ENCODE measurements at regions of chr7 and their contacts with region 1.

Region 1: DNA sequence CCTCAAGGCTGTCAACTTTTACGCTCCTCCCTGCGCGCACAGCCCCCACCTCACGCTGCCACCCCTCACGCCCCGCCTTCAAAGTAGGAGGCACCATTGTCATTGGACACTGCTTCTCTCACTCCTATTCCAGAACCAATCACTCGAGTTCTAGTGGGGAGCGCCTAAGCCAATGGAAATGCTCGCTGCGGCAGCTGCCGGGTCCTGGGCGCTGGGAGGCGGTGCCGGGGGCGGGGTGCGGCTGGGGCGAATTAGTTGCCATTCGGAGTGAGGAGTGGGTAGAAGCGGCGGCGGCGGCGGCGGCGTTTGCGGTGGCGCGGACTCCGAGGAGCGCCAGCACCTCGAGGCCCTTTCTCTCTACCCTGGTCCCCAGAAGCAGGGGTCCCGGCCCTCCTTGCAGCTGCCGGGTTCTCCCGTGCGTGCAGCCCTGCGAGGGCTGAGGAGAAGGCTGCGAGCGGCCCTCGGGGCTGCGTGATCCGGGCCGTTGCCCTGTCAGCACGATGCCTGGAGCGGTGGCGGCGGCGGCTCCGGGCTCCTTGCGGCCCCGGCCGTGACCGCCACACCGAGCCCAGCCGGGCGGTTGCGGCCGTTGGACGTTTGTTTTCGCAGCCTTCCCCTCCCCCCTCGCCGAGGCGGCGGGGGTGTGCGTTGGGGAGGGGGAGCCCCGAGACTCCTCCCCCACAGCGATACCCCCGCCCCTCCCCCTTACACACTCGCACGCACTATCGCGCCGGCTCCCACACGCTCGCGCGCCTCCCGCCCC is at the start of gene GLCCI1:
- DNase-seq: peak; percentile 93
- ATAC-seq: peak; percentile 89
- H3K4me3 Mint-ChIP-seq: peak within 1 kb of the TSS; percentile 92
- H3K27ac Mint-ChIP-seq: peak within 1 kb of the TSS; percentile 96
- H3K4me1 Mint-ChIP-seq: peaks cover 36% of the 10 kb centered on the region
- H3K27me3 Mint-ChIP-seq: no peaks in the 10 kb centered on the region
- CTCF ChIP-seq: no peak
- total RNA-seq, gene GLCCI1: 32.4 and 37.4 TPM in 2 replicates

Region 2: DNA sequence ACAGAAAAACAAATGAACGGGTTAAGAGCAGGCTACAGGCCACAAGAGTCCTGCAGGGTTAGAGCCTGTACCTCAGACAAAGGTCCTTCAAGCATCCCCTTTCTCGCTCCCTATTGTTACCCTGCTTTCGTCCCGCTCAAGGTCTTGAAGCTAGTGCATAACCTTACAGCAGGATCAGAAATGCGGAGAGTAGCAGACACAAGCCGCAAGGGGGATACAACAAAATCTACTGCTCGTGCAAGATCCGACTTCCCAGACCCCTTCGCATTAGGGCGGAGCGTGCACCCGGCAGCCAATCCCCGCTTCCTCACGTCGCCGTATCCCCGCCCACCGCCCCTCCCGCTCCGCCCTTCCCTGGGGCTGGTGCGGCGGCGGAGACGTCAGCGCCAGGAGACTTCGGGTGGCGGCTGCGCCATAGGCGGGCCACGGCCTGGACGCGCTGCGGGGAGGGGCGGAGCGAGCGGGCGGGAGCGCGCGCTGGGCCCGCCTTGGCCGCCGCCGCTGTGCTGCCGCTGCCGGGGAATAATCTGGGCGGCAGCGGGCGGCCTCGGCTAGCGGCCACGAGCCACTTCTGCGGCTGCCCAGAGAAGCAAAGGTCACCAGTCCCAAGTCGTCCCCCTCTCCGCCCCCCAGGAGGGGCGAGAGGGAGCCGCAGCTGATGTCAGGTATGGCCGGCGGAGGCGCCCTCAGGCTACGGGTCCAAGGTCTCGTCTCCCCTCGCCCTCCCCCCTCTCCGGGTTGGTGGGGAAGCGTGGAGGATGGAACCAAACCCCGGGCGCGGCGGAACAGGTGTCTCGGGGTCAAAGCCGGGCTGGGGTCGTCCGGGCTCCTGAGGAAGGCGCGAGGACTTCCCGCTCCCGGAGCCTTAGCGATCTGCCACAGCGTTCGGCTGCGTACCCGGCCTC is 786.3 kb before region 1 on chr7 and contains the start of gene C1GALT1:
- CTCF ChIA-PET with region 1: no interaction called
- POLR2A ChIA-PET with region 1: interaction called, 3 read pairs
- intact Hi-C with region 1: loop called (anchors 1 kb)
- DNase-seq: peak; percentile 94
- ATAC-seq: peak; percentile 84
- H3K4me3 Mint-ChIP-seq: peak within 1 kb of the TSS; percentile 99
- H3K27ac Mint-ChIP-seq: peak within 1 kb of the TSS; percentile 100
- H3K4me1 Mint-ChIP-seq: peaks cover 43% of the 10 kb centered on the region
- H3K27me3 Mint-ChIP-seq: no peaks in the 10 kb centered on the region
- CTCF ChIP-seq: no peak
- total RNA-seq, gene C1GALT1: 42.1 and 44.2 TPM in 2 replicates

Region 3: DNA sequence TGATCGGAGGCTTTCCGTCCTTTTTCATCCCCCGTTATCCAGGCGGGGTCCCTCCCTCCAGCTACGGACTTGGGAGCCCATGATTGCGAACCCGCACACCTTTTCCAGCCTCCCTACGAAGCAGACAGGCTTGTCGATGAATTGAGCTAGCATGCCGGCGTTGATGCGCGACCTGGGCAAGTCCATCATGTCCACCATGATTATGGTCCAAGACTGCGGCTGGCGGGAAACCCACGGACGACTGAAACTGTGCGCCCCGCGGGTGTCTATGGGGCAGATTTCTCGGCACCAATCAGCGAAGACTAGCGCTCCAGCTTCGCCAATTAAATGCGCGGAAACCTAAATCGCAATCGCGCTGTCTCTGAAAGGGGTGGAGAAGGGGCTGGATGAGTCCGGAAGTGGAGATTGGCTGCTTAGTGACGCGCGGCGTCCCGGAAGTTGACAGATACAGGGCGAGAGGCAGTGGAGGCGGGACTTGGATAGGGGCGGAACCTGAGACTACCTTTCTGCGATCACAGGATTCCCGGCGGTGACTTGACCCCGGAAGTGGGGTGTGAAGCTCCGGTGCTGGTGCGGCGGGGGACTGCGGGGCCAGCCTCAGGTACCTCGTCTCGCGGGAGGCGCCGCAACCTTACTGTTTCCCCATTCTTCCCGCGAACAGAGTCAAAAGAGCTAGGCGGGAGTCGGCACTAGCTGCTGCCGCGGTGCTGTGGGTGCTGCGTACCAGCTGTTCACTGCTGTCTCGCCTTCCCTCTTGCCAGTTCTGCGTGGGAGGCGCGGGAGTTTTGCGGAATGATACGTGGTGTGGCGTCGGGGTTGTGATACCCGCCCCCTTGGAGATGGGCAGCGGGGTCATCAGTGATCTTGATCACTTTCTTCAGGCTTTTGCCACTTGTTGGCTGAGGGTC is 328.2 kb before region 1 on chr7 and contains the start of gene UMAD1:
- CTCF ChIA-PET with region 1: no interaction called
- POLR2A ChIA-PET with region 1: interaction called, 43 read pairs
- intact Hi-C with region 1: loop called (anchors 1 kb)
- DNase-seq: peak; percentile 92
- ATAC-seq: peak; percentile 88
- H3K4me3 Mint-ChIP-seq: peak within 1 kb of the TSS; percentile 97
- H3K27ac Mint-ChIP-seq: peak within 1 kb of the TSS; percentile 97
- H3K4me1 Mint-ChIP-seq: peaks cover 38% of the 10 kb centered on the region
- H3K27me3 Mint-ChIP-seq: no peaks in the 10 kb centered on the region
- CTCF ChIP-seq: no peak
- total RNA-seq, gene UMAD1: 13.9 and 15.4 TPM in 2 replicates

Region 4: DNA sequence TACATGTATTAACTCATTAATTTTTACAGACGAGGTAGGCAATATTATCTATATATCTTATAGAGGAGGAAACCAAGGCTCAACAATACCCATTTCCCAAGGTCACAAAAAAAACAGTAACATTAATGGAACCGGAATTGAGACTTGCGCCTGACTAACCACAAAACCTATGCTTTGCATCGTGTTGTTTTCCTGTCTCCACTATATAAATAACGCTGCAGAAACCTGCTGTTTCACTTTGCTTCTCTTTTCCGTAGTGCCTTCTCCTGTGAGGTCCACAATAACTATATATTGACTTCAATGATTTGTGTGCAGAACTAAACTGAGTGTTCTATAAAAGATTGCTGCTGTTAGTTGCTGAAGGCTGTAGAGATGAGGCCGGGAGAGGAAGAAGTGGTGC is 152.6 kb before region 1 on chr7:
- CTCF ChIA-PET with region 1: no interaction called
- POLR2A ChIA-PET with region 1: interaction called, 4 read pairs
- intact Hi-C with region 1: loop called (anchors 1 kb)
- DNase-seq: no peak
- ATAC-seq: peak; percentile 56
- H3K4me3 Mint-ChIP-seq: peak overlapping the region; percentile 67
- H3K27ac Mint-ChIP-seq: peak overlapping the region; percentile 82
- H3K4me1 Mint-ChIP-seq: peaks cover 71% of the 10 kb centered on the region
- H3K27me3 Mint-ChIP-seq: no peaks in the 10 kb centered on the region
- CTCF ChIP-seq: no peak

Region 5: DNA sequence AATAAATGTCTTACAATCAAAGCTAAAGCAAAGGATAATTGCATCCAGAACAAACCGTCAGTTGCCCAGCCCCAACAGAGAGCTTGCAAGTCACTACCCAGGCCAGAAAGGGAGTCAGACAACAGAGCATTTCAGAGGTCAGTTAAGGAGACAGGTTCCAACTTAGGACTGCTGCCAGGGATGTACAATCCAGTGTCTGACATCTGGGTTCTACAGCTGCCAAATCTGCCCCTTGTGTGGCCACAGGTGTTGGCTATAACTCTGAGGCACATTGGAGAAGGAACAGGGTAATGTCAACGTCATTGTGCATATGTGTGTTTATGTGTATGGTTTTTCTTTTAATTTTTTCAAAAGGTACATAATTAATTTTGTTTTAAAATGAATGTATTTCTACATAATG is 85.3 kb before region 1 on chr7:
- CTCF ChIA-PET with region 1: no interaction called
- POLR2A ChIA-PET with region 1: no interaction called
- intact Hi-C with region 1: no loop called
- DNase-seq: no peak
- ATAC-seq: no peak
- H3K4me3 Mint-ChIP-seq: no peak overlapping the region
- H3K27ac Mint-ChIP-seq: peak overlapping the region; percentile 50
- H3K4me1 Mint-ChIP-seq: peaks cover 23% of the 10 kb centered on the region
- H3K27me3 Mint-ChIP-seq: no peaks in the 10 kb centered on the region
- CTCF ChIP-seq: no peak

Region 6: GRCh38 chr7:7895004-7895650 is 73.6 kb before region 1 on chr7:
- CTCF ChIA-PET with region 1: no interaction called
- POLR2A ChIA-PET with region 1: no interaction called
- intact Hi-C with region 1: no loop called
- DNase-seq: no peak
- ATAC-seq: no peak
- H3K4me3 Mint-ChIP-seq: no peak overlapping the region
- H3K27ac Mint-ChIP-seq: no peak overlapping the region
- H3K4me1 Mint-ChIP-seq: no peaks in the 10 kb centered on the region
- H3K27me3 Mint-ChIP-seq: no peaks in the 10 kb centered on the region
- CTCF ChIP-seq: no peak

Region 7: DNA sequence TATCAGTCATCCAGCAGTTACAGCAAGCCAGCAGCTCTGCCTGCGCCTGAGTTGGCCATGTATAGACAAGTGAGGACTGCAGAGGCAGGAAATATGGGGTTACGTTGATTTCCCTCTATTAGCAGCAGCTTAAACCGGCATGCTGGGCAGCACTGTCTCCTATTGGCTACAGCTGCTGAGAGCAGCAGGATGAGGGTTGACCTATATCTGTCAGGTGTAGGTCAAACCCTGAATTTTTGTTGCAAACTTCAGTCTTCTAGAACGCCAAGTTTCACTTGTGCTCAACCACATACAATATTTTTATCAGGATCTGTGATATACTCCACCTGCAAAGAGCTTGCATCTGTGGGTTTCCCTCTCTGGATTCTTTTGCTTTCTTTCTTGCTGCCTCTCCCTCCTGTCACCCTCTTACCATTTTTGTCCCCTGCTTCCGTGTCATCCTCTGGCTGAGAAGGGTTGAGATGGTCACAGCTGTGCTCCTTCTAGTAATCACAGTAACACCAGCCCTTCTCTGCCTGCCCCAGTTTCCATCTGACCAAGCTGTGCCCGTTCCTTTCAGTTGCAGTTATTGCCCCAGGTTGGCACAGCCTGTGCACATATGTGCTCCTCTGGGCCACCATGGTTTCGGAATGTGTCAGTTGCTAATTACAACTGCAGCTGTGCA is 24.0 kb before region 1 on chr7:
- CTCF ChIA-PET with region 1: interaction called, 3 read pairs
- POLR2A ChIA-PET with region 1: interaction called, 75 read pairs
- intact Hi-C with region 1: loop called (anchors 1 kb)
- DNase-seq: peak; percentile 48
- ATAC-seq: peak; percentile 92
- H3K4me3 Mint-ChIP-seq: peak overlapping the region; percentile 69
- H3K27ac Mint-ChIP-seq: peak overlapping the region; percentile 79
- H3K4me1 Mint-ChIP-seq: peaks cover 28% of the 10 kb centered on the region
- H3K27me3 Mint-ChIP-seq: no peaks in the 10 kb centered on the region
- CTCF ChIP-seq: no peak

Region 8: GRCh38 chr7:8035647-8036518 is 67.2 kb after region 1 on chr7:
- CTCF ChIA-PET with region 1: interaction called, 5 read pairs
- POLR2A ChIA-PET with region 1: interaction called, 11 read pairs
- intact Hi-C with region 1: no loop called
- DNase-seq: no peak
- ATAC-seq: peak; percentile 92
- H3K4me3 Mint-ChIP-seq: no peak overlapping the region
- H3K27ac Mint-ChIP-seq: peak overlapping the region; percentile 21
- H3K4me1 Mint-ChIP-seq: peaks cover 10% of the 10 kb centered on the region
- H3K27me3 Mint-ChIP-seq: no peaks in the 10 kb centered on the region
- CTCF ChIP-seq: no peak

Region 9: DNA sequence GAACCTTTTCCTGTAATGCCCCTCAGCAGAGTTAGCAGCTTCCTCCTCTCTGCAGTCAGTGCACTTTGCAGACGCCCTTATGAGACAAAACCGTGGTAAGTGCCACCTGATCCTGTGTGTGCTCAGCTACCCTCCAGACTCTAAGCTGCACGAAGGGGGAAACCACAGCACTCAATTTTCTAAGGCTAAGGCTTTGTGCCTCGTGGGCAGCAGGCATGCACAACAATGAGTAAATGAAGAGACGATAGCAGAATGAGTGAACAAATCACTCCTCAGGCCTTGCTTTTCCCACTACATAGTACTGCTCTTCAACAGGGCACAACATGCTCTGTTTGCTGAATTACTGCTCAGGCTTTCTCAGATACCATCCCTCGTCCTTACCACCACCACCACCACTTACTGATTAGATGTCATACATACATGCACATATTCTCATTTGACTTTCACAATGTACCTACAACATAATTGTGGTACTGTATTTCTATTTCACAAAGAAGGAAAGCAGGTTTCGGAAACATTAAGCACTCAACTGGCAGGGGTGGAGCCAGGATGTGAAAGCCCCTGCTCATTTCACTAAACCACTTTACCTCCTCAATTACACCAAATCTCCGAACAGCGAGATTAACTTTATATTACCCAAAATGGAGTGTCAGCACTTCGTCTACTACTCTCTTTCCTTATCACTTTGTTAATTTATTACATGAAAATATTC is 207.8 kb after region 1 on chr7:
- CTCF ChIA-PET with region 1: no interaction called
- POLR2A ChIA-PET with region 1: interaction called, 8 read pairs
- intact Hi-C with region 1: loop called (anchors 1 kb)
- DNase-seq: peak; percentile 21
- ATAC-seq: peak; percentile 89
- H3K4me3 Mint-ChIP-seq: peak overlapping the region; percentile 61
- H3K27ac Mint-ChIP-seq: peak overlapping the region; percentile 91
- H3K4me1 Mint-ChIP-seq: peaks cover 61% of the 10 kb centered on the region
- H3K27me3 Mint-ChIP-seq: no peaks in the 10 kb centered on the region
- CTCF ChIP-seq: no peak

Region 10: DNA sequence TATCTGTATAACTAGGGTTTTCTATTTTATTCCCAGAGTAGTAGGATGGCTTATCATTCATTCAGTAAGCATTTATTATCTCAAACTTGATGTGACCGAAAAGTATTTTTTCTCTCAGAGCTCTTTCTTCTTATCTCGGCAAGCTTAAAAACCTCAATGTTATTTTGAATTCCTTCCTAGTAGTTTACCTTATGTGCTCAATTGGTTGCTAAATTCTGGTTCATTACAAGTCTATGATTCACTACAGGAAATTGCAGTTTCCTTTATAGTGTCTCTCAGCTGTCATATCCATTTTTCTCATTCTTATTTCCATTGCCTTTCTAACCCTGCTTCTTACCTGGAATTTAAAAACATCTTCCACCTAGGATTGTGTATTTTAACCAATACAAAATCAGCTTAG is 305.9 kb after region 1 on chr7:
- CTCF ChIA-PET with region 1: no interaction called
- POLR2A ChIA-PET with region 1: no interaction called
- intact Hi-C with region 1: no loop called
- DNase-seq: no peak
- ATAC-seq: no peak
- H3K4me3 Mint-ChIP-seq: no peak overlapping the region
- H3K27ac Mint-ChIP-seq: no peak overlapping the region
- H3K4me1 Mint-ChIP-seq: no peaks in the 10 kb centered on the region
- H3K27me3 Mint-ChIP-seq: peaks cover 10% of the 10 kb centered on the region
- CTCF ChIP-seq: no peak

Measured in activated B cell treated with CpG ODN at 0.5 μM for 24 hours (primary cell).